GM10248 (cell line): ENCODE measurements at regions of chr7 and their contacts with region 1.

Region 1: GRCh38 chr7:129423700-129424618 is 10.3 kb upstream of the STRIP2 start:
- DNase-seq: no peak
- CTCF ChIP-seq: no peak

Region 2: DNA sequence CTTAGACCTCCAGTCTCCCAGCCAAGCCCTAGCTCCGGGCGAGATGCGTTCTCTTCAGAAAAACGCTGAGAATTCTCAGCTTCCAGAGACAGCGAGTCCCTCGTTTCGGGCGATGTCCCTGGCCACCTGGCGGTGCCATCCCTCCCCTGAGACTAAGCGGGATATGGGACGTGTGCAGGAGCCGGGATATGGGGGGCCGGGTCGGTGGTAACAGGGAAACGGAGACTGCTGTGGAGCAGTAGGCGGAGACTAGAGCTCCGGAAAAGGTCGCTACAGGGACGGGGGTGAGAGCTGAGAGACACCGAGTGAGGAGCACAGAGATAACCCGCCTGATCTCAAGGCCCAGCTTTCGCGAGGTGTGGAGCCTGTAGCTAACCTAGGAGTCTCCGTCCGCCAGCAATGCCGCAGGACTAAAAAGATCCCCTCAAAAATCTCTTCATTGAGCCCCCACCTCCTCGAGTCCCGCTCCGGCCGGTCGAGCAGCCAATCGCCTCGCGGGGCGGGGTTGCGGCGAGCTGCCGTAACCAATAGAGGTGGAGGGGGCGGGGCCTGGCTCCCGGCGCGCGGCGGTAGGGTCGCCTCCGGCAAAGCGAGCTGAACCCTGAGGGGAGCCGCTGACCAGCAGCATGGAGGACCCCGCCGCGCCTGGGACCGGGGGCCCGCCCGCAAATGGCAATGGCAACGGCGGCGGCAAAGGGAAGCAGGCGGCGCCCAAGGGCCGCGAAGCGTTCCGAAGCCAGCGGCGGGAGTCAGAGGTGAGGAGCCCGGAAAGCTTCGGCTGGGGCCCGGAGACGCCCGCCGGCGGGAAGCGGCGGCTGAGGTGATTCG is 10.1 kb after region 1 on chr7 and contains the start of gene STRIP2:
- CTCF ChIA-PET with region 1: interaction called, 16 read pairs
- POLR2A ChIA-PET with region 1: no interaction called
- DNase-seq: peak; percentile 94
- CTCF ChIP-seq: no peak